ENCODE measurements at regions of chr15 and their contacts with region 1.

Region 1: DNA sequence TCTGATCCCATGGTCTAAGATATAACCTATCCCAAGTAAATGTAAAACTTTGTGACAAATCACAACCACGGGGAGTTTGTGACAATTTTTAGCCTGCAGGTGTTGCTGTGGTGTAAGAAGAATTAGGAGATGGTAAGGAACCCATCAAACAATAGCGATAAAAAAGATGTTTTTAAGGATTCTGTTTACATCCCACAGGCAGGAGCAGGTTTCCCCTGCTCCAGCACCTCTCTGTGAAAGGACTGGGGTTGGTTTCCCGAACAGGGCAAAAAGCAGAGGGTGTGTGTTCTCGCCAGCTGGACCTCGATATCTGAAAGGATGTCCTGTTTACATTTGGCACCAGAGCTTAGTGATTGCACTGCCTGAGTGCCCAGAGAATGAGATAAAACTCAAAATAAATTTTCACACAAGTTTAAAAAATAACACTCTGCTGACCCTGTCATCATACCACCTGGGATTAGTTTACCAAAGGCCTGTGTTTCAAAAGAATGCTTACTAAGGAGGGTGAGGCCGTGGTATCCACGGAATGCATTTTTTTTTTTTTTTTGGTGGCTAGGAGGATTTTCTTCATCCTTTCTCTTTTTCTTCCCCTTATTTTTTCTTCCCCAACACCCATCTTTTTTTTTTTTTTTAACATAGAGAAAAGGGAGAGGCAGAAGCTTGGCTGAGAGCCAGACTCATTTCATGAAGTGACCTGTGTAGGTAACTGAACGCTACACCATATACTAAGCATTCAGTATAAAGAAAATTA is 151.8 kb upstream of the DPH6 start:
- DNase-seq: no peak
- ATAC-seq: no peak
- H3K4me3 ChIP-seq: no peak overlapping the region
- H3K4me3 Mint-ChIP-seq: no peak overlapping the region
- H3K27ac ChIP-seq: no peak overlapping the region
- H3K27ac Mint-ChIP-seq: no peak overlapping the region
- H3K4me1 ChIP-seq: no peaks in the 10 kb centered on the region
- H3K4me1 Mint-ChIP-seq: no peaks in the 10 kb centered on the region
- H3K27me3 ChIP-seq: no peaks in the 10 kb centered on the region
- H3K27me3 Mint-ChIP-seq: peaks cover 0 to 24% (median 0%) of the 10 kb centered on the region in 5 donors

Region 2: GRCh38 chr15:35410774-35411173 is 286.9 kb before region 1 on chr15:
- CTCF ChIA-PET with region 1: no interaction called
- POLR2A ChIA-PET with region 1: no interaction called
- intact Hi-C with region 1: loop called in 1 of 2 experiments (anchors 10 kb)
- DNase-seq: no peak
- ATAC-seq: no peak
- H3K4me3 ChIP-seq: no peak overlapping the region
- H3K4me3 Mint-ChIP-seq: no peak overlapping the region
- H3K27ac ChIP-seq: no peak overlapping the region
- H3K27ac Mint-ChIP-seq: no peak overlapping the region
- H3K4me1 ChIP-seq: no peaks in the 10 kb centered on the region
- H3K4me1 Mint-ChIP-seq: no peaks in the 10 kb centered on the region
- H3K27me3 ChIP-seq: no peaks in the 10 kb centered on the region
- H3K27me3 Mint-ChIP-seq: no peaks in the 10 kb centered on the region

Region 3: GRCh38 chr15:35657679-35658311 is 39.9 kb before region 1 on chr15:
- CTCF ChIA-PET with region 1: no interaction called
- POLR2A ChIA-PET with region 1: no interaction called
- intact Hi-C with region 1: no loop called
- DNase-seq: no peak
- ATAC-seq: no peak
- H3K4me3 ChIP-seq: no peak overlapping the region
- H3K4me3 Mint-ChIP-seq: no peak overlapping the region
- H3K27ac ChIP-seq: no peak overlapping the region
- H3K27ac Mint-ChIP-seq: no peak overlapping the region
- H3K4me1 ChIP-seq: no peaks in the 10 kb centered on the region
- H3K4me1 Mint-ChIP-seq: peaks cover 0 to 3% (median 0%) of the 10 kb centered on the region in 7 donors
- H3K27me3 ChIP-seq: no peaks in the 10 kb centered on the region
- H3K27me3 Mint-ChIP-seq: peaks cover 3 to 15% (median 12%) of the 10 kb centered on the region in 5 donors

Measured in naive thymus-derived CD4-positive, alpha-beta T cell (primary cell).